IMR-90 (cell line): ENCODE measurements at regions of chrX and their contacts with region 1.

Region 1: DNA sequence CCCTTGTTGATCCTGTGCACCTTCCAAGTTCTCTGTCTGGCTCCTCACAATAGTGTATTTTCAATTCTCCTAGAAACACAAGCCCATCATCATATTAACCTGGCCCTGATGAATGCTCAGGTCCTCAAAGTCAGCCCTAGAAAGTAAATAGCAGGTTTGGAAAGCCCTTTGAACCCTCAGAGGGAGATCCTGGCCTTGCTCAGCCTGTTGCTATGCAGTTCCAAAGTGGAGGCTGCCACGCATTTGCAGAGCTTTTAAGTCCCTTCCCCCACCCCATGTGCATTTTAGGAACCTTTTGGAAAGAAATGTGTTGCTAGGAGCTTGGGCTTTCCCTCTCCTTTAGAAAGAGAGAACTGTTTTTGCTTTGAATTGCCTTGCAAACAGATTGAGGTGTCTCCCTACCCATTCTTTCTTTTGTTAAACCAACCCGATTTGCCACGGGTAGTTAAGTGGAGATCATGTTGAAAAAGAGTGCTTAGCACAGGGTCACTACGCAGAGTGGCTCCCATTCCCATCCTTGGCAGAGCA is 12.2 kb downstream of the MAMLD1 start:
- DNase-seq: peak; percentile 6
- ATAC-seq: no peak
- H3K4me3 ChIP-seq: no peak overlapping the region
- H3K27ac ChIP-seq: no peak overlapping the region
- H3K4me1 ChIP-seq: no peaks in the 10 kb centered on the region
- H3K27me3 ChIP-seq: no peaks in the 10 kb centered on the region
- CTCF ChIP-seq: no peak
- POLR2A ChIP-seq: no peak
- RAD21 ChIP-seq: no peak

Region 2: DNA sequence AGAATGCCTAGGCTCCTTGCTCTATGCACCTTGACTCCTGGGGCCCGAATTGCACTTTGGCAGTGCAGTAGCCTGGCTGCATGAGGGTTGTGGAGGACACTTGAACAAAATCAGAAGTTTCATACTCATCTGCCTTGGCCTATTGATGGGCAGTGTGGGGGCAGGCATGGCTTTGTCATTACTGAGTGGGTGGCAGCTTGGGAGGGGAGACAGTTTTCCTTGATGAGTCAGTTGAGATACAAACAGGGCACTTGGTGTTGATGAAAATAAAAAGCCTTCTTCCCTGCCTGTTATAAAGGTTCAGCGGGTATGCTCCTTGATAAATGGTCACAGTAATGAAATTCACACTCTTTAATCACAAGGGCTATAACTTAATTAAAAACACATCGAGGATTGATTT is 139.0 kb before region 1 on chrX:
- CTCF ChIA-PET with region 1: no interaction called
- POLR2A ChIA-PET with region 1: no interaction called
- dilution Hi-C with region 1: no loop called
- in situ Hi-C with region 1: no loop called
- intact Hi-C with region 1: no loop called
- DNase-seq: peak; percentile 44
- ATAC-seq: peak; percentile 46; the same call in 1 of the 2 replicates
- H3K4me3 ChIP-seq: no peak overlapping the region
- H3K27ac ChIP-seq: no peak overlapping the region
- H3K4me1 ChIP-seq: peaks cover 2% of the 10 kb centered on the region; the same call in 1 of the 2 replicates
- H3K27me3 ChIP-seq: no peaks in the 10 kb centered on the region
- CTCF ChIP-seq: no peak
- POLR2A ChIP-seq: no peak
- RAD21 ChIP-seq: no peak

Region 3: DNA sequence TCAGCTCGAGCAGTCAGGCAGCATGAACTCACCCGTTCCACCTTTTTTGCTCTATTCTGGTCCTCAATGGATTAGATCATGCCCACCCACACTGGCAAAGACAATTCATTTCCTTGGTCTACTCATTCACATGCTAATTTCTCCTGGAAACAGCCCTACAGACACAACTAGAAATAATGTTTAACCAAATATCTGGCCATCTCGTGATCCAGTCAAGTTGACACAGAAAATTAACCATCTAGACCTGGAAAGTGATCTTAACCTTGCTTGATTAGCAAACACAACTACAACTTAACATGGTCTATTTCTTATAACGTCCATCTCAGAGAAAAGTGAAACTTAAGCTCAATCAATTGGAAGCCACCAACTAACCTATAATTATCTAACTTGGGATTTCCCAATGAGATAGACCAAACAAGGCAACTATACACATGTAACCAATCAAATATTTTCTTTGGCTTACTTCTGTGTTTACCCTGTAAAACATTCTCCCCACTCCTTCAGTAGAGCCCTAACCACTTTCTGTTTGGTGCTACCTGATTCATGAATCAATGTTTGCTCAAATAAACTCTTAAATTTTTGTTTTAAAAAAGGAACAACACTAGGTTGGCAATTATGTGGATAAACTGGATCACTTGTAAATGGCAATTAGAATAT is 81.8 kb before region 1 on chrX:
- CTCF ChIA-PET with region 1: no interaction called
- POLR2A ChIA-PET with region 1: no interaction called
- dilution Hi-C with region 1: no loop called
- in situ Hi-C with region 1: no loop called
- intact Hi-C with region 1: no loop called
- DNase-seq: no peak
- ATAC-seq: no peak
- H3K4me3 ChIP-seq: no peak overlapping the region
- H3K27ac ChIP-seq: no peak overlapping the region
- H3K4me1 ChIP-seq: no peaks in the 10 kb centered on the region
- H3K27me3 ChIP-seq: no peaks in the 10 kb centered on the region; the same call in 1 of the 2 replicates
- CTCF ChIP-seq: no peak
- POLR2A ChIP-seq: no peak
- RAD21 ChIP-seq: no peak

Region 4: GRCh38 chrX:150429594-150429993 is 54.3 kb after region 1 on chrX:
- CTCF ChIA-PET with region 1: no interaction called
- POLR2A ChIA-PET with region 1: no interaction called
- dilution Hi-C with region 1: no loop called
- in situ Hi-C with region 1: no loop called
- intact Hi-C with region 1: no loop called
- DNase-seq: peak; percentile 86
- ATAC-seq: peak; percentile 40
- H3K4me3 ChIP-seq: no peak overlapping the region
- H3K27ac ChIP-seq: no peak overlapping the region
- H3K4me1 ChIP-seq: no peaks in the 10 kb centered on the region
- H3K27me3 ChIP-seq: no peaks in the 10 kb centered on the region
- CTCF ChIP-seq: no peak
- POLR2A ChIP-seq: no peak
- RAD21 ChIP-seq: no peak

Region 5: GRCh38 chrX:150449313-150449712 is 74.0 kb after region 1 on chrX:
- CTCF ChIA-PET with region 1: no interaction called
- POLR2A ChIA-PET with region 1: no interaction called
- dilution Hi-C with region 1: no loop called
- in situ Hi-C with region 1: no loop called
- intact Hi-C with region 1: loop called (anchors 5 kb)
- DNase-seq: no peak
- ATAC-seq: no peak
- H3K4me3 ChIP-seq: no peak overlapping the region
- H3K27ac ChIP-seq: no peak overlapping the region
- H3K4me1 ChIP-seq: no peaks in the 10 kb centered on the region
- H3K27me3 ChIP-seq: no peaks in the 10 kb centered on the region
- CTCF ChIP-seq: no peak
- POLR2A ChIP-seq: no peak
- RAD21 ChIP-seq: no peak

Region 6: GRCh38 chrX:150508451-150509367 is 133.4 kb after region 1 on chrX:
- CTCF ChIA-PET with region 1: no interaction called
- POLR2A ChIA-PET with region 1: no interaction called
- dilution Hi-C with region 1: no loop called
- in situ Hi-C with region 1: no loop called
- intact Hi-C with region 1: no loop called
- DNase-seq: peak; percentile 10
- ATAC-seq: peak; percentile 50
- H3K4me3 ChIP-seq: no peak overlapping the region
- H3K27ac ChIP-seq: no peak overlapping the region
- H3K4me1 ChIP-seq: peaks cover 6% of the 10 kb centered on the region
- H3K27me3 ChIP-seq: no peaks in the 10 kb centered on the region
- CTCF ChIP-seq: no peak
- POLR2A ChIP-seq: no peak
- RAD21 ChIP-seq: no peak